ENCODE measurements at regions of chr1 and their contacts with region 1.

Region 1: GRCh38 chr1:65195495-65196417 is 47.8 kb downstream of the AK4 start:
- DNase-seq: no peak
- H3K4me3 Mint-ChIP-seq: no peak overlapping the region
- H3K27ac Mint-ChIP-seq: peak overlapping the region; percentile 9
- H3K4me1 Mint-ChIP-seq: peaks cover 30% of the 10 kb centered on the region
- H3K27me3 Mint-ChIP-seq: no peaks in the 10 kb centered on the region

Region 2: GRCh38 chr1:65213271-65214023 is 17.7 kb after region 1 on chr1:
- intact Hi-C with region 1: loop called (anchors 2 kb)
- DNase-seq: peak; percentile 63
- H3K4me3 Mint-ChIP-seq: peak overlapping the region; percentile 72
- H3K27ac Mint-ChIP-seq: peak overlapping the region; percentile 93
- H3K4me1 Mint-ChIP-seq: peaks cover 69% of the 10 kb centered on the region
- H3K27me3 Mint-ChIP-seq: no peaks in the 10 kb centered on the region

Measured in activated CD4-positive, alpha-beta T cell treated with anti-CD3 and anti-CD28 coated beads, Interleukin-2, amount 10 ng/mL, durations not matched to agents 24 days and 14 days (primary cell).